Sciatic nerve (tissue), 2 donors: ENCODE measurements at regions of chr11 and their contacts with region 1.

Region 1: GRCh38 chr11:19553683-19554333 is 158.8 kb upstream of the NAV2 start:
- DNase-seq: peak; percentile 94
- ATAC-seq: peak; percentile 83

Region 2: GRCh38 chr11:19311308-19312030 is 242.3 kb before region 1 on chr11:
- intact Hi-C with region 1: loop called (anchors 5 kb)
- DNase-seq: peak; percentile 87
- ATAC-seq: peak; percentile 91